Colonic mucosa (tissue), 4 donors: ENCODE measurements at regions of chr17 and their contacts with region 1.

Region 1: DNA sequence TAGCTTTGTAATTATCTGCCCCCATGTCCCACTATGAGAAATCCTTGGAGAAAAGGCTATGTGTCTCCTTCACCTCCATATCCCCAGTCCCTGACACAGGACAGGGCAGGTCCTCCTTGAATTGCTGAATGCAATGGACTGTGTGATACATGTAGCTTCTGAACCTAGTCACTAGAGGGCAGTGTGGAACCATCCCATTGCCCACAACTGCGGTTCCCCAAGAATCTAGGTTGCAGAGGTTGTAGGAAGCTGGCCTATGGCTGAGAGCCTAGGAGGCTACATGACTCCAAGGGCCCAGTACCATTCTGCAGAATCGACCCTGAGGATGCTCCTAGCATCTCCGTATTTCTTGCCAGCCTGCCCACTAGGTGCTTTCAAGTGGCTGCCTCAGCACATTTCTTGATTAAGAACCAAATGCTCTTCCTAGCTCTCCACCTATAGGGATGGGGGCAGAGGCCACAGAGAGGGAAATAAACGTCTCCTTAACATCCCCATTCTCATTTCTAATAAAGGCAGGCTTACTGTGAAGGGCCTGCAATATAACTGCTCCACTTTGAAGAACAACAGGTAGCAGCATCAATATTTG is 394.0 kb downstream of the CA10 start:
- DNase-seq: peak; percentile 46
- H3K4me3 ChIP-seq: no peak overlapping the region
- H3K27ac ChIP-seq: no peak overlapping the region
- H3K4me1 ChIP-seq: no peaks in the 10 kb centered on the region
- H3K27me3 ChIP-seq: no peaks in the 10 kb centered on the region
- CTCF ChIP-seq: peak; percentile 66

Region 2: GRCh38 chr17:51703361-51704341 is 60.8 kb before region 1 on chr17:
- intact Hi-C with region 1: no loop called
- DNase-seq: no peak
- H3K4me3 ChIP-seq: no peak overlapping the region
- H3K27ac ChIP-seq: no peak overlapping the region
- H3K4me1 ChIP-seq: no peaks in the 10 kb centered on the region
- H3K27me3 ChIP-seq: no peaks in the 10 kb centered on the region
- CTCF ChIP-seq: no peak

Region 3: GRCh38 chr17:51734462-51734861 is 30.0 kb before region 1 on chr17:
- intact Hi-C with region 1: no loop called
- DNase-seq: peak; percentile 18
- H3K4me3 ChIP-seq: no peak overlapping the region
- H3K27ac ChIP-seq: no peak overlapping the region
- H3K4me1 ChIP-seq: no peaks in the 10 kb centered on the region
- H3K27me3 ChIP-seq: no peaks in the 10 kb centered on the region
- CTCF ChIP-seq: no peak

Region 4: GRCh38 chr17:51850201-51850600 is 85.7 kb after region 1 on chr17:
- intact Hi-C with region 1: loop called (anchors 5 kb)
- DNase-seq: no peak
- H3K4me3 ChIP-seq: no peak overlapping the region
- H3K27ac ChIP-seq: no peak overlapping the region
- H3K4me1 ChIP-seq: no peaks in the 10 kb centered on the region
- H3K27me3 ChIP-seq: no peaks in the 10 kb centered on the region
- CTCF ChIP-seq: no peak